Uterus (tissue), 4 donors: ENCODE measurements at regions of chr20 and their contacts with region 1.

Region 1: DNA sequence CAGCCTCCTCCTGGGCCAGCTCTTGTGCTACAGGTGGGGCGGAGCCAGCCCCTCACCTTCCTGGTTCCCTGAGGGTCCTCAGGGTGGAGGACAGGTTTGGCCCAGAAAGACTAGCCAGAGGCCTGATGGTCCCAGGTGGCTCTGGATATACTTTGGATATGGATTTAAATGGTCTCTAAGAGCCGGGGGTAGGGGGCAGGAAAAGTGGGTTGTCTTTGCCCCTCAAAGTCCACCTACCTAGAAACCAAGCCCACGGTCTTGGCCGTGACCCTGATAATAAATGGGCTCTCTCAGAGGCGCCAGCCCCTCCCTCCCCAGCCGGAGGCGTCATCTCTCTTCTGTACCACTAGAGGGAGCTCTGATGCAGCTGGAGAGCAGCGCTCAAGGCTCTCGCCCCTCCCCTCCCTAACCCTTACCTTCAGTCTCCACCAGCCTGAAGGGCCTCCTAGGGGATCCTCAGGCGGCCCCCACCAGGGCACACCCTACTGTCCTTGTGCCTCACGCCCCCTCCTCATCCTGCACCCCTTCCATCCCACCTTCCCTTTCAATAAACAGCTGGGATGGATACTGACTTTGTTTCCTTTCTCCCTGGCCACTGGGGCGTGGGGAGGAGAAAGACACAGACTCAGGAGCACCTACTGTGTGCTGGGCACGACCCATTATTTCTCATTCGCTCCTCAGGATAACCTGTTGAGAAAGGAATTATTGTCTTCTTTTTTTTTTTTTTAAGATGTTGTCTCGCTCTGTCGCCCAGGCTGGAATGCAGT is 7.6 kb downstream of the NRSN2 start:
- DNase-seq: peak; percentile 74 to 76
- H3K4me3 ChIP-seq: no peak overlapping the region
- H3K27ac ChIP-seq: no peak overlapping the region
- H3K4me1 ChIP-seq: no peaks in the 10 kb centered on the region
- H3K27me3 ChIP-seq: no peaks in the 10 kb centered on the region
- CTCF ChIP-seq: peak; percentile 90 to 97 (median 93)
- POLR2A ChIP-seq: no peak

Region 2: DNA sequence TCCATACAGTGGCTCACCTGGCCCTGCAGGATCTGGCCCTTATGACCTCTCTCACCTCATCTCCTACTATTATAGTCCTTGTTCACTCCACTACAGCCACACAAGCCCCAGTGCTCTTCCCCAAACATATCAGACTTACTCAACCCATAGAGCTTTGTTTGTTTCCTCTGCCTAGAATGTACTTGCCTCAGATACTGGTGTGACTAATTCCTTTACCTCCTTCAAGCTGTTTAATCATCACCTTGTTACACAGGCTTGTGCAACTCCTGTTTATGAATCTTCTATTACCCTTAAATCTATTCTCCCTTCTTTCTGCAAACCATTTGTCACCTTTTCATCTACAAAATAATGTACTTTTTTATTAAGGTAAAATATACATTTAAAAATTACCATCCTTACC is 263.8 kb before region 1 on chr20:
- intact Hi-C with region 1: no loop called
- DNase-seq: no peak
- H3K4me3 ChIP-seq: no peak overlapping the region
- H3K27ac ChIP-seq: no peak overlapping the region
- H3K4me1 ChIP-seq: no peaks in the 10 kb centered on the region
- H3K27me3 ChIP-seq: no peaks in the 10 kb centered on the region
- CTCF ChIP-seq: no peak
- POLR2A ChIP-seq: no peak

Region 3: DNA sequence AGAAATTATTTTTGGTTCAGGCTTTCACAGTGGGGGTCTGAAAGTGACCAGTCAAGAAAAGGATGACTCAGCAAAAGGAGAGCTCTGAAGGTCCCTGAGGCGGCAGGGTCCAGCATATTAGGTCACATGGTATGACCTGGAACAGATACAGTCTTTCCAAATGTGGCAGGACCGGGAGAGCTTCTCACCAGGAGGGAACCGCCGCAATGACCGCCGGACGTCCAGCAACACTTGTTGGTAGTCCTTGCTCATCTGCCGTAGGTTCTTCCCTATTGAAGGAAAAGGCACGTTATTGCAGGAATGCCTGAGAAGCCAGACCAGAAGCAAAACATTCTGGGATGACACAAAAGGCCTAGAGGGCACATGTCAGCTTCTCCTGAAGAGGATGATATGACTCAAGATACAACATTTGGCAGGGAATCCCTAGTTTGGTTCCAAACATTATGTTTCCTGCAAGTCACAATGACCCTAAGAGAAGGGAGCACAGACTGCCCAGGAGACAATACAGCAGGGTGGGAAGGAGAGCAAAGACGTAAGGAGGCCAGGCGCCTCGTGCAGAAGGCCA is 90.5 kb after region 1 on chr20:
- intact Hi-C with region 1: no loop called
- DNase-seq: no peak
- H3K4me3 ChIP-seq: no peak overlapping the region
- H3K27ac ChIP-seq: peak overlapping the region in 1 of 2 donors; percentile 13
- H3K4me1 ChIP-seq: no peaks in the 10 kb centered on the region
- H3K27me3 ChIP-seq: no peaks in the 10 kb centered on the region
- CTCF ChIP-seq: no peak
- POLR2A ChIP-seq: no peak

Region 4: GRCh38 chr20:478949-479429 is 124.5 kb after region 1 on chr20:
- intact Hi-C with region 1: loop called (anchors 5 kb)
- DNase-seq: no peak
- H3K4me3 ChIP-seq: no peak overlapping the region
- H3K27ac ChIP-seq: no peak overlapping the region
- H3K4me1 ChIP-seq: no peaks in the 10 kb centered on the region
- H3K27me3 ChIP-seq: no peaks in the 10 kb centered on the region
- CTCF ChIP-seq: peak; percentile 48 to 56 (median 52)
- POLR2A ChIP-seq: no peak

Region 5: DNA sequence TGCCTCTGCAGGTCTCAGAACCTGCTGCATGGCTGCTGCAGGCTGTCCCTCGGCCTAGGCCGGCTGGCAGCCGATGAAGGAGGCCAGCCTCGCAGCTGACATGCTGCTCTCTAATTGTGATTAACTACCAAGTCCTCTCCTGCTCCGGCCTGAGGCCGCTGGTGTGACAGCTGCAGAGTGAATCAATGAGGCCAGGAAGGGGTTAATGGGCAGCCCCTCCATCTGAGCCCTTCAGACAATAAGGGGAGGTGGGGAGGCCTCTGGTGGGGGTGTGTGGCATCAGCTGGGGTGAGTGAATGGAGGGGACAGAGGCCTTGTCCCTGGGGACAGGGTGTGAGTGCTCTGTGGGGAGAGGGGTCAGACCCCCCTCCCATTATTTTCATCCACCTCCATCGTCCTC is 379.4 kb after region 1 on chr20:
- intact Hi-C with region 1: loop called (anchors 10 kb)
- DNase-seq: no peak
- H3K4me3 ChIP-seq: no peak overlapping the region
- H3K27ac ChIP-seq: no peak overlapping the region
- H3K4me1 ChIP-seq: no peaks in the 10 kb centered on the region
- H3K27me3 ChIP-seq: no peaks in the 10 kb centered on the region
- CTCF ChIP-seq: no peak
- POLR2A ChIP-seq: no peak